Activated B cell treated with CpG ODN at 0.5 μM for 24 hours (primary cell): ENCODE measurements at regions of chr5 and their contacts with region 1.

Region 1: GRCh38 chr5:16791036-16791705 is 144.9 kb downstream of the MYO10 start:
- DNase-seq: no peak
- ATAC-seq: no peak
- H3K4me3 Mint-ChIP-seq: no peak overlapping the region
- H3K27ac Mint-ChIP-seq: no peak overlapping the region
- H3K4me1 Mint-ChIP-seq: peaks cover 2% of the 10 kb centered on the region
- H3K27me3 Mint-ChIP-seq: peaks cover 2% of the 10 kb centered on the region
- CTCF ChIP-seq: no peak

Region 2: DNA sequence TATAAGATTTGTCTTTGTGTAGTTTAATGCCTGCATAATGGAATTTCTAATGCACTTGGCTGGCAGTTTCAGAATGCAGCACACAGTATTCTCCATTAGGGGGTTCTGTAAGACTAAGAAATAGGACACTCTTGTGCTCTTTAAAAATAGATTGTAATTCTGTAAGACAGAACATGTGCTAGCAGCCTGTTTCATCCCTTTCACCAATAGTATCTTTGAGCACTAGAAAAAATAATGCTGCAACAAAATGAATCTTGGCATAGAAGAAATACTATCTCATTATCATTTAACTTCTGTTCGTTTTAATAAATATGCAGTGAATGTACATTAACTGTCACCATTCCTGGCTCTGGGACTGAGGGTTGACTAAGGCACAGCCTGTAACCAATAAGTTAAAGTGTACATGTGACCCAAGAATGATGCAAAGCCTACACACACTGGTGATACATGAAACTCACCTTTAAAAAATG is 301.8 kb before region 1 on chr5:
- CTCF ChIA-PET with region 1: no interaction called
- POLR2A ChIA-PET with region 1: no interaction called
- intact Hi-C with region 1: loop called (anchors 2 kb)
- DNase-seq: no peak
- ATAC-seq: peak; percentile 54
- H3K4me3 Mint-ChIP-seq: no peak overlapping the region
- H3K27ac Mint-ChIP-seq: no peak overlapping the region
- H3K4me1 Mint-ChIP-seq: no peaks in the 10 kb centered on the region
- H3K27me3 Mint-ChIP-seq: no peaks in the 10 kb centered on the region
- CTCF ChIP-seq: no peak

Region 3: DNA sequence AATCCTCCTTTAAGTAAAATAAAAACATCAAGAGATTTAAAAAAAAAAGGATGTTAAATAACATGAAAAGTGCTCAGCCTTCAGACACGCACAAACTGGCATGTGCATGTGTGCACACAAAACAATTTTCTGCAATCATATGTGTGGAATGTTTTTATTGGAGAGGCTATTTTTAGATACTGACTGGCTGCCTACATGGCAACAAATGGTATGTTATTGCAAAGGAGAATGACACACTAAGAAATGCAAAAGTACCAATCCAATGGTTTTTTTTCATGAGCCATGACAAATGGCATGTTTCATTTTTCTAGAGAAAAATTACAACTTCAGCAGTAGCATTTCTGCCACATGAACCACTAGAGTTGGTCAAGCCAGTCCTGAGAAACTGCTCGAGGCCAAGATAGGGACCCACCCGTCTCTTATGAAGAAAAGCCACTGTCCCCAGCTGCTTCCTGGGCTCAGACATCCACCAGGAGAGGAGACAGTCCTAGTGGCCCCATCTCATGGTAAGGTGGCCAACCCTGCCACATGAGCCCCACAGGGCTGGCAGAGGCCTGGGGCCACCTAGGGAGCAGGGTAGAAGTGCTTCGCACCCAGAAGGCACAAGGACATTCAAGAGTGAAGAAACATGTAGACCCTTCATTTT is 28.5 kb after region 1 on chr5:
- CTCF ChIA-PET with region 1: no interaction called
- POLR2A ChIA-PET with region 1: no interaction called
- intact Hi-C with region 1: no loop called
- DNase-seq: no peak
- ATAC-seq: no peak
- H3K4me3 Mint-ChIP-seq: no peak overlapping the region
- H3K27ac Mint-ChIP-seq: no peak overlapping the region
- H3K4me1 Mint-ChIP-seq: no peaks in the 10 kb centered on the region
- H3K27me3 Mint-ChIP-seq: no peaks in the 10 kb centered on the region
- CTCF ChIP-seq: no peak

Region 4: GRCh38 chr5:17132444-17133083 is 341.4 kb after region 1 on chr5:
- CTCF ChIA-PET with region 1: interaction called, 11 read pairs
- POLR2A ChIA-PET with region 1: no interaction called
- intact Hi-C with region 1: loop called (anchors 1 kb)
- DNase-seq: no peak
- ATAC-seq: no peak
- H3K4me3 Mint-ChIP-seq: no peak overlapping the region
- H3K27ac Mint-ChIP-seq: no peak overlapping the region
- H3K4me1 Mint-ChIP-seq: no peaks in the 10 kb centered on the region
- H3K27me3 Mint-ChIP-seq: peaks cover 17% of the 10 kb centered on the region
- CTCF ChIP-seq: peak; percentile 23

Region 5: DNA sequence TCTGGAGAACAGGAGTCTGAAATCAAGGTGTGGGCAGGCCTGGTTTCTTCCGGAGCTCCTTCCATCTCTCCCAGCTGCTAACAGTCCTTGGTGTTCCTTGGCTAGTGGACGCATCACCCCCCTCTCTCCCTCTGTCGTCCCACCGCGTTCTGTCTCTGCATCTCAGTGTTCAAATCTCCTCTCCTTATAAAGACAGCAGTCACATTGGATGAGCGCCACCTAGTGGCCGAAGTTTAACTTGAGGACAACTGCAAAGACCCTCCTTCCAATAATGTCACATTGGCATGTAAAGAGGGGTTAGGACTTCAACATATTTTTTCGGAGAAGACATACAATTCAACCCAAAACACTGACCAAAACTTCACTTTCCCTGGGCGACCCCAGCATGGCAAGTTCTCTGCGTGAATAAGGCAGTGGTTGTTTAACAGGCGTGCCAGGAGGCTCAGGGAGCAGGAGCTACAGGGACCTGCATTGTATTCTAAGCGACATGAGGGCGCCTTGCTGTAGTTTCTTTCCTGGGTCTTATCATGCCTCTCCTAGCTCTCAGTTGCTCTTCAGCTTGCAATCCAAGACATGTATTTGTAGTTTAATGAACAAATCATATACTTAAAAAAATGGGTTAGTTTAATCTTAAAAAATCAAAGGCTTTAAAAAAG is 398.3 kb after region 1 on chr5:
- CTCF ChIA-PET with region 1: interaction called, 32 read pairs
- POLR2A ChIA-PET with region 1: no interaction called
- intact Hi-C with region 1: loop called (anchors 1 kb)
- DNase-seq: peak; percentile 44
- ATAC-seq: peak; percentile 37
- H3K4me3 Mint-ChIP-seq: no peak overlapping the region
- H3K27ac Mint-ChIP-seq: no peak overlapping the region
- H3K4me1 Mint-ChIP-seq: peaks cover 7% of the 10 kb centered on the region
- H3K27me3 Mint-ChIP-seq: peaks cover 3% of the 10 kb centered on the region
- CTCF ChIP-seq: no peak

Region 6: DNA sequence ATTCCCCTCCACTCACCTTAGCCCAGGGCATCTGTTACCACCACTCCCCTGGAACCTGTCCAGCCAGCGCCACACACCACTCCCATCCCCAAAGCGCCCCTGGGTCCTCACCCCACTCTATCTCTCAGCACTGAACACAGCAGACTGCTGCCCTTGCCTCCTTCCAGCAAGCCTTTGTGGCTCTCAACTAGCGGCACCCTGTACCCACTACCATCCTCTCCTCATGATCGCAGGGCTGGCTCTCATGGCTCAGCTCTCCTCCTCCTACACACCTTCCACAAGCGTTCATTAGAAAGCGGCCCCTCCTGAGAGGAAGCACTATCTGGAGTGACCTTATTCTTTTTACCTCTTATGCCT is 412.9 kb after region 1 on chr5:
- CTCF ChIA-PET with region 1: interaction called, 3 read pairs
- POLR2A ChIA-PET with region 1: no interaction called
- intact Hi-C with region 1: loop called (anchors 1 kb)
- DNase-seq: no peak
- ATAC-seq: no peak
- H3K4me3 Mint-ChIP-seq: no peak overlapping the region
- H3K27ac Mint-ChIP-seq: no peak overlapping the region
- H3K4me1 Mint-ChIP-seq: no peaks in the 10 kb centered on the region
- H3K27me3 Mint-ChIP-seq: no peaks in the 10 kb centered on the region
- CTCF ChIP-seq: no peak

Region 7: DNA sequence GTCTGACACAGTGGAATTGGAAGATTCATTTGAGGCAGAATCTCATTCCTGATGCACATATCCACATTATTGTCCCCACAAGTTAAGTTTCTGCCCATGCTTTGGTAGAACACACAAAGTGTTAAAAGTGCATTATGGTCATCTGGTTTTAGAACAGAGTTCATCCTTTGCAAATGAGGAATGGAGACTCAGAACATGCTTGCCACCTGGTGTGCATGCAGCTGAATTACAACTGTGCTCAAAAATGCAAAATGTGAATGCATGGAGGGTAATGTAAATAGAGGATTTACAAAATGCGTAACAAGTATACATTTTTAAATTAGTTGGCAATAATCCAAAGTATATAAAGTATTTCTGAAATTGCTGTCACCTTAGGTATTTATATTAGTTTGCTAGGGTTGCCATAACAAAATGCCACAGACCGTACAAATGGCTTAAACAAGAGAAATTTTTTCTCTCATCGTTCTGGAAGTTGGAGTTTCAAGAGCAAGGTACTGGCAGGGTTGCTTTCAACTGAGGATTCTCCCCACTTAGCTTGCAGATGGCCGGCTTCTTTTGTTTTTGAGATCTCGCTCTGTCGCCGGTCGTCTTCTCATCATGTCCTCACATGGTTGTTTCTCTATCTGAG is 1514.2 kb after region 1 on chr5:
- CTCF ChIA-PET with region 1: interaction called, 7 read pairs
- POLR2A ChIA-PET with region 1: no interaction called
- intact Hi-C with region 1: loop called (anchors 2 kb)
- DNase-seq: no peak
- ATAC-seq: peak; percentile 70
- H3K4me3 Mint-ChIP-seq: no peak overlapping the region
- H3K27ac Mint-ChIP-seq: no peak overlapping the region
- H3K4me1 Mint-ChIP-seq: no peaks in the 10 kb centered on the region
- H3K27me3 Mint-ChIP-seq: peaks cover 5% of the 10 kb centered on the region
- CTCF ChIP-seq: no peak

Region 8: GRCh38 chr5:18314192-18314778 is 1523.1 kb after region 1 on chr5:
- CTCF ChIA-PET with region 1: interaction called, 4 read pairs
- POLR2A ChIA-PET with region 1: no interaction called
- intact Hi-C with region 1: loop called (anchors 1 kb)
- DNase-seq: no peak
- ATAC-seq: no peak
- H3K4me3 Mint-ChIP-seq: no peak overlapping the region
- H3K27ac Mint-ChIP-seq: no peak overlapping the region
- H3K4me1 Mint-ChIP-seq: no peaks in the 10 kb centered on the region
- H3K27me3 Mint-ChIP-seq: no peaks in the 10 kb centered on the region
- CTCF ChIP-seq: no peak